GM12878 (cell line): ENCODE measurements at regions of chr13 and their contacts with region 1.

Region 1: GRCh38 chr13:67238277-67238859 is 8.2 kb upstream of the PCDH9 start:
- DNase-seq: no peak
- ATAC-seq: peak; percentile 61
- H3K4me3 ChIP-seq: no peak overlapping the region
- H3K27ac ChIP-seq: no peak overlapping the region
- H3K4me1 ChIP-seq: no peaks in the 10 kb centered on the region
- H3K27me3 ChIP-seq: no peaks in the 10 kb centered on the region
- CTCF ChIP-seq: peak; percentile 39 to 66 (median 43); a peak in 3 of 6 replicates
- EP300 ChIP-seq: no peak
- POLR2A ChIP-seq: no peak
- RAD21 ChIP-seq: peak; percentile 64

Region 2: GRCh38 chr13:65656740-65657329 is 1581.5 kb before region 1 on chr13:
- CTCF ChIA-PET with region 1: interaction called, 15 read pairs
- POLR2A ChIA-PET with region 1: no interaction called
- RAD21 ChIA-PET with region 1: interaction called, 5 read pairs
- SMC1A ChIA-PET with region 1: interaction called, 4 read pairs
- in situ Hi-C with region 1: loop called (anchors 5 kb)
- intact Hi-C with region 1: loop called (anchors 5 kb)
- DNase-seq: no peak
- ATAC-seq: peak; percentile 52; the same call in 1 of the 3 replicates
- H3K4me3 ChIP-seq: no peak overlapping the region
- H3K27ac ChIP-seq: no peak overlapping the region
- H3K4me1 ChIP-seq: no peaks in the 10 kb centered on the region
- H3K27me3 ChIP-seq: no peaks in the 10 kb centered on the region
- CTCF ChIP-seq: peak in 1 of 3 experiments; percentile 27; a peak in 3 of 6 replicates
- EP300 ChIP-seq: no peak
- POLR2A ChIP-seq: no peak
- RAD21 ChIP-seq: 0 out of 2 replicates have a peak, but pooled peaks have one; percentile 8

Region 3: GRCh38 chr13:66618702-66619101 is 619.7 kb before region 1 on chr13:
- CTCF ChIA-PET with region 1: interaction called, 18 read pairs
- POLR2A ChIA-PET with region 1: no interaction called
- RAD21 ChIA-PET with region 1: interaction called, 8 read pairs
- SMC1A ChIA-PET with region 1: interaction called, 6 read pairs
- in situ Hi-C with region 1: no loop called
- intact Hi-C with region 1: no loop called
- DNase-seq: no peak
- ATAC-seq: no peak
- H3K4me3 ChIP-seq: no peak overlapping the region
- H3K27ac ChIP-seq: no peak overlapping the region
- H3K4me1 ChIP-seq: no peaks in the 10 kb centered on the region
- H3K27me3 ChIP-seq: no peaks in the 10 kb centered on the region
- CTCF ChIP-seq: peak in 2 of 3 experiments; percentile 15 to 36; a peak in 2 of 6 replicates
- EP300 ChIP-seq: no peak
- POLR2A ChIP-seq: no peak
- RAD21 ChIP-seq: no peak

Region 4: GRCh38 chr13:66689628-66690027 is 548.7 kb before region 1 on chr13:
- CTCF ChIA-PET with region 1: interaction called, 10 read pairs
- POLR2A ChIA-PET with region 1: no interaction called
- RAD21 ChIA-PET with region 1: interaction called, 9 read pairs
- SMC1A ChIA-PET with region 1: interaction called, 5 read pairs
- in situ Hi-C with region 1: no loop called
- intact Hi-C with region 1: no loop called
- DNase-seq: no peak
- ATAC-seq: peak; percentile 44; the same call in 1 of the 3 replicates
- H3K4me3 ChIP-seq: no peak overlapping the region
- H3K27ac ChIP-seq: no peak overlapping the region
- H3K4me1 ChIP-seq: no peaks in the 10 kb centered on the region
- H3K27me3 ChIP-seq: no peaks in the 10 kb centered on the region
- CTCF ChIP-seq: peak in 1 of 3 experiments; percentile 7; a peak in 1 of 6 replicates
- EP300 ChIP-seq: no peak
- POLR2A ChIP-seq: no peak
- RAD21 ChIP-seq: no peak

Region 5: GRCh38 chr13:67224148-67224846 is 14.1 kb before region 1 on chr13:
- CTCF ChIA-PET with region 1: interaction called, 13 read pairs
- POLR2A ChIA-PET with region 1: no interaction called
- RAD21 ChIA-PET with region 1: interaction called, 10 read pairs
- SMC1A ChIA-PET with region 1: interaction called, 8 read pairs
- in situ Hi-C with region 1: no loop called
- intact Hi-C with region 1: no loop called
- DNase-seq: no peak
- ATAC-seq: peak; percentile 52
- H3K4me3 ChIP-seq: no peak overlapping the region
- H3K27ac ChIP-seq: no peak overlapping the region
- H3K4me1 ChIP-seq: no peaks in the 10 kb centered on the region
- H3K27me3 ChIP-seq: no peaks in the 10 kb centered on the region; a peak in 1 of 4 replicates
- CTCF ChIP-seq: peak in 2 of 3 experiments; percentile 25 to 43; a peak in 3 of 6 replicates
- EP300 ChIP-seq: no peak
- POLR2A ChIP-seq: no peak
- RAD21 ChIP-seq: peak; percentile 59